Left colon (tissue), 2 donors: ENCODE measurements at regions of chr6 and their contacts with region 1.

Region 1: GRCh38 chr6:27081931-27082330 is 165.6 kb upstream of the PRSS16 start:
- DNase-seq: no peak
- ATAC-seq: no peak

Region 2: DNA sequence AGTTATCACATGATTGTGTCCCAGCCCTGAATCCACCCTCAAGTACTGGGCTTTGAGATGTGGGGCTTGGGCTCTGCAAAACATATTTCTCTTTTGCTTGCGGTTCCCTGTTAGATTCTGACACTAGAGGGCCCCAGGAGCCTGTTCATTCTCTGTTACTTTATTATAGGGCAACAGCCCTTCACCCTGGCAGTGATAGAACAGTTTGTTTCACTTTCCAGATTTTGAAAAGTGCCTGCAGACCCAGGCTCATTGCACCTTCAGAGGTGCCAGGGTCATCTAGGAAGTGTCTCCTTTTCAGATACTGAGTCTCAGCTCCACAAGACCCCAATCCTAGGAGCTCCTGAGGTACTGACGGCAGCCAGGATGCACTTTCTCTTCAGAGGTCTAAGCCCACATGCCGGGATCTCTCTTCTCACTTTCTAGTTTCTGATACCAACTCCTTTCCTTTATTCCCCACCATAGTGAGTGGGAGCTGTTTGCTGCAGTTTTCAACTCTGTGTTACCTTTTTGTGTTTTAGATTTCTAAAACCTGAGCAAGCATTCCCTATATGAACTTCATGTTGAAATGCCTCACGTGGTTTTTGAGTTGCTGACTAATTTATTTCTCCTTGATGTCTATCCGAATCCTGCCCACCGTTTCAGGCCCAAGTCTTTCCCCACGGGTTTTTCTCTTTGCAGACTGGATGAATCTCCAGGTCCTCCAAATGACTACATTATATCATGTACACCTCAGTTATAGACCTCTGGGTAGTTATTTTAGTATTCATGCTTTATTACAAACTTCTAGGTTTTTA is 474.3 kb before region 1 on chr6:
- intact Hi-C with region 1: loop called in 1 of 2 experiments (anchors 5 kb)
- DNase-seq: peak in 1 of 2 donors; percentile 44
- ATAC-seq: peak; percentile 88

Region 3: DNA sequence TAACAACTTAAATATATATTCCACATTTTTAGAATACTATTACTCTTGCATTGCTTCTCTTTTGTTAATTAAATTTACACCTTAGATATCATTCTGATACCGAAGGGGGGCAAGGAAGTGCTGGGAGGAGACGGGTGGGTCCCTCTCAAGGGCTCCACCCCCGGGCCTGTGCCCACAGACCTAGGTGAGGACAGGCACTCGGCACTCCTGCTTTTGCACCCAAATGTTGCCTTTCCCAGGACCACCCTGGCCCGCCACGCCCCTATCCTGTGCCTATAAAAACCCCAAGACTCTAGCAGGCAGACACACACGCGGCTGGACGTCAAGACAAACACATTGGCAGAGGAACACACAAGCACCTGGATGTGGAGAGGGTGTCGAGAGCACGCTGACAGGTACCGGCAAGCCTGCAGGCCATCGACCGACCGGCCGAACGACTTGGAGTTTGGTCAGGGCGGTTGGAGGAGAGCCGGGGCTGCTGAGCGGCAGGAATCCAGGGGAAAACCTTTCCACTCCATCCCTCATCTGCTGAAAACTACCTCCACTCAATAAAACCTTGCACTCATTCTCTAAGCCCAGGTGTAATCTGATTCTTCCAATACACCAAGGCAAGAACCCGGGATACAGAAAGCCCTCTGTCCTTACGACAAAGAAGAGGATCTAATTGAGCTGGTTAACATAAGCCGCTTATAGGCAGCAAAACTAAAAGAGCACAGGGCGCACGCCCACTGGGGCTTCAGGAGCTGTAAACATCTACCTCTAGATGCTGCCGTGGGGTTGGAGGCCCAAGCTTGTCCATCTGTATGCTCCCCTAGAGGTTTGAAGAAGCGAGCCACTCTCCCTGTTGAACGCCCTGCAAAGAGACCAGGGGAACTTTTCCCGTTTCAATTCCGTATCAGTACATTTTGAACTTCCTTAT is 31.8 kb before region 1 on chr6:
- intact Hi-C with region 1: no loop called
- DNase-seq: no peak
- ATAC-seq: no peak

Region 4: GRCh38 chr6:27205375-27206278 is 123.7 kb after region 1 on chr6:
- intact Hi-C with region 1: no loop called
- DNase-seq: no peak
- ATAC-seq: no peak